ENCODE measurements at regions of chr12 and their contacts with region 1.

Region 1: GRCh38 chr12:57815177-57816000 is 3.1 kb downstream of the AVIL start:
- DNase-seq: no peak
- H3K4me3 ChIP-seq: no peak overlapping the region
- H3K27ac ChIP-seq: no peak overlapping the region
- H3K4me1 ChIP-seq: peaks cover 0 to 10% (median 3%) of the 10 kb centered on the region in 4 experiments
- H3K27me3 ChIP-seq: no peaks in the 10 kb centered on the region

Region 2: DNA sequence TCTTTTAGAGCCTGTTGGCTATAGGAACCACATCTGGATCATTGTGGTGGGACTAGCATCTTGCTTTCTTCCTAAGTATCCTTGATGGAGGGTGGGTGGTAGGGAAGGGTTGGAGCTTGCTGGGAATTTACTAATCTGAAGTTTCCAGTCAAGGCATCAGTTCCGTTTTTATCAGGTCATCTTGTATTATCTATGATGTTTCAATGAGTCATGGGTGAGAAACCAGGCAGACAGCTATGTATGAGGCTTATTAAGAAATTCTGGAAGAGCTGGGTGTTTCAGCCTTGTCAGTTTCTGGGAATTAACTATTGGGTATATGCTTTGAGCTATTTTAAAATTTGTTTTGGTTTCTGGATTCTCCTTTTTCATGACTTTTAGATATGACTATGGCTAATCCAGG is 21.5 kb before region 1 on chr12:
- CTCF ChIA-PET with region 1: interaction called, 41 read pairs
- POLR2A ChIA-PET with region 1: no interaction called
- DNase-seq: no peak
- H3K4me3 ChIP-seq: no peak overlapping the region
- H3K27ac ChIP-seq: no peak overlapping the region
- H3K4me1 ChIP-seq: peaks cover 0 to 7% (median 0%) of the 10 kb centered on the region in 4 experiments
- H3K27me3 ChIP-seq: no peaks in the 10 kb centered on the region

Region 3: GRCh38 chr12:57803319-57803893 is 12.0 kb before region 1 on chr12:
- CTCF ChIA-PET with region 1: interaction called, 41 read pairs
- POLR2A ChIA-PET with region 1: no interaction called
- DNase-seq: peak; percentile 14 to 36 (median 21)
- H3K4me3 ChIP-seq: no peak overlapping the region
- H3K27ac ChIP-seq: no peak overlapping the region
- H3K4me1 ChIP-seq: no peaks in the 10 kb centered on the region
- H3K27me3 ChIP-seq: no peaks in the 10 kb centered on the region

Region 4: DNA sequence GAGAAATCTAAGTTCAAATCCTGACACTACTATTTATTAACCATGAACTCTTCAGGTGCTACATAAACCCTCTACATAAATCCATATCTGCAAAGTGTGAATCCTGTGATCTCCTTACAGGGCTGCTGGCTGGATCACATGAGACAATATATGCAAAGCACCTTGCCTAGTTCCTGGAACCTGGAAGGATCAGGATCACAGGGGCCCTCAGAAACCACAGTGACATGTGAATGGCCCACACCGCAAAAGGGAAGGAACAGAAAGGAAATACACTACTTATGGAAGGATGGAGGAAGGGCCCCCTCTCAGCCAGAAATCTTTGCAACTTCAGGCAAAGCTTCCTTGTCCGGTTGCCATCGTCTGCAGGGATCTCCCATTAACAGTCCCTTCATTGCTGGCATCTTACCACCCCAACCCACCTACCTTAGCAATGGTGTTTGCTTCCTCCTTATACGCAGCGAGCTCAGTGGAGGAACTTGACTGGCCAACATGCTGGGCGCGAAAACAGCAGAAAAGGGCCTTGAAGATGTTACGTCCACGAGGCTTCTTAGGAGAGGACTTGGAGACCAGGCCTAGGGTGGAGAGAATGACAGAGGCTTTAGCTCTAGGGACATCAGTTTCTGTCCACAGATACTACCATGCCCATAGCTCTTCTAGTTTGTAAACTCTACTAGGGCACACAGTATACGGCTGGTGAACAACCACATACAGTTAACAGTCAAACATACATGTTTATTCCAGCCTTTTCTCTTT is 13.8 kb after region 1 on chr12:
- CTCF ChIA-PET with region 1: interaction called, 12 read pairs
- POLR2A ChIA-PET with region 1: no interaction called
- DNase-seq: no peak
- H3K4me3 ChIP-seq: no peak overlapping the region
- H3K27ac ChIP-seq: no peak overlapping the region
- H3K4me1 ChIP-seq: peaks cover 9 to 47% (median 45%) of the 10 kb centered on the region in 4 experiments
- H3K27me3 ChIP-seq: no peaks in the 10 kb centered on the region

Region 5: DNA sequence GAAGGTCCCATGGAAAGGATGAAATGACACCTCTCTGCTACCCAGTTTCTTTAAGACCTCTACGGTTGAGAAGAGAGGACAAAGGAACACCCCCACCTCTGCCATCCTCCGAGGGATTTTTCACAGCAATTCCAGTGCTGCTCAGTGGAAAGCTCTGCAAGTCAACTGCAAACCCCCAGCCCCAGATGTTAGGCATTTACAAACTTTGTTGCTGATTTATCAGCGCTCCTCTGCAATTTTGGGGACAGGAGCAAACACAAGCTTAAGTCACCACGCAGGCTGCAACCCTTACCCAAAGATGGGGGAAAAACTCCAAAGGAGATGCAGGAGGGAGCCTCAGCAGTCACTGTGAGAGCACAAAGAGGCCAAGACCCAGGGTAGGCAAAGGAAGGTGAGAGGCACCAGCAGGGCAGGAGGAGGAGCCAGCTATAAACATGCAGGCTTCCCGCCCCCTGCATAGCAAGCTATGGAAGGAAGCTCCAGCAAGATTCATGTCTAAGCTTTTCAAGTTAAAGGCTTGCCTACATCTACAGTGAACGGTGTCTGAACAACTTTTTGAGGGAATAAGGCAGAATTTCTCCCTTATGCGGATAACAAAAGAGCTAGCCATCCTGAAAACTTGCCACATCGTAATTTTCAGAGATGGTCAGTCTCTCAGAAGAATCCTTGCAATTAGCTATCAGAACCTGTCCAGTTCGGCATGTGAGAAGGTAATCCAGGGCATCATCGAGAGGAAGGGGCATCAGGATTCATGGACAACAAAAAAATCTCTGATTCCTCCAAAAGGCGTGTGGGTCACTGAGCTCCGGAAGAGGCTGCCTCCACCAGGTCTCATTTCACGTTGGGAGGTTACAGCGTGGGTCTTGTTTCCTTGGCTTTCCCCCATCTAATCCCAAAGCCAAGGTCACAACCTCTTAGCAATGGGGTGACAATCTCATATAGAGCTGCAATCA is 27.2 kb after region 1 on chr12:
- CTCF ChIA-PET with region 1: no interaction called
- POLR2A ChIA-PET with region 1: no interaction called
- DNase-seq: peak in 1 of 3 donors; percentile 40
- H3K4me3 ChIP-seq: peak overlapping the region in 6 of 7 experiments; percentile 13 to 98 (median 31)
- H3K27ac ChIP-seq: peak overlapping the region in 1 of 2 experiments; percentile 54
- H3K4me1 ChIP-seq: peaks cover 44 to 78% (median 75%) of the 10 kb centered on the region in 4 experiments
- H3K27me3 ChIP-seq: no peaks in the 10 kb centered on the region